Naive thymus-derived CD4-positive, alpha-beta T cell (primary cell): ENCODE measurements at regions of chr2 and their contacts with region 1.

Region 1: DNA sequence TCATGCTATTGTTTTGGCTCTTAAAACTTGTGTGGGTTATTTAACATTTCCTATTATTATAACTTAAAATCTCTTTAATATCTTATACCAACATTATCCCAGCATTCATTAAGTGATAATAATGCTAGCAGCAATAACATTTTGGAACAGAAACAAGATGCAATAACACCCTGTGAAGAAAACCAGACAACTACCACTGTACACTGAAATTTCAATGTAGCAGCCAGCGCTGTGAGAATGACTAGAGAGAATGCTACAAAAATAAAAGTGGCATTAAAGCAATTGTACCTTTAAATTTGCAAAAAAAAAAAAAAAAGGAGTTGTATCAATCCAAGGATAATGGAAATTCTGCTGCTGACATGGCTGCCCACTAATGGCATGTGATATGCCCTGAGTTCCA is 269.9 kb downstream of the TTC32 start:
- DNase-seq: no peak
- ATAC-seq: no peak
- H3K4me3 ChIP-seq: no peak overlapping the region
- H3K4me3 Mint-ChIP-seq: no peak overlapping the region
- H3K27ac ChIP-seq: no peak overlapping the region
- H3K27ac Mint-ChIP-seq: no peak overlapping the region
- H3K4me1 ChIP-seq: no peaks in the 10 kb centered on the region
- H3K4me1 Mint-ChIP-seq: peaks cover 0 to 3% (median 0%) of the 10 kb centered on the region in 7 donors
- H3K27me3 ChIP-seq: no peaks in the 10 kb centered on the region
- H3K27me3 Mint-ChIP-seq: peaks cover 7 to 35% (median 14%) of the 10 kb centered on the region in 5 donors

Region 2: GRCh38 chr2:18788592-18788991 is 843.3 kb before region 1 on chr2:
- CTCF ChIA-PET with region 1: no interaction called
- POLR2A ChIA-PET with region 1: no interaction called
- intact Hi-C with region 1: no loop called
- DNase-seq: no peak
- ATAC-seq: no peak
- H3K4me3 ChIP-seq: no peak overlapping the region
- H3K4me3 Mint-ChIP-seq: no peak overlapping the region
- H3K27ac ChIP-seq: no peak overlapping the region
- H3K27ac Mint-ChIP-seq: no peak overlapping the region
- H3K4me1 ChIP-seq: no peaks in the 10 kb centered on the region
- H3K4me1 Mint-ChIP-seq: peaks cover 0 to 3% (median 0%) of the 10 kb centered on the region in 7 donors
- H3K27me3 ChIP-seq: no peaks in the 10 kb centered on the region
- H3K27me3 Mint-ChIP-seq: no peaks in the 10 kb centered on the region

Region 3: GRCh38 chr2:18871430-18871829 is 760.4 kb before region 1 on chr2:
- CTCF ChIA-PET with region 1: no interaction called
- POLR2A ChIA-PET with region 1: interaction called, 10 read pairs
- intact Hi-C with region 1: no loop called
- DNase-seq: no peak
- ATAC-seq: no peak
- H3K4me3 ChIP-seq: no peak overlapping the region
- H3K4me3 Mint-ChIP-seq: no peak overlapping the region
- H3K27ac ChIP-seq: no peak overlapping the region
- H3K27ac Mint-ChIP-seq: no peak overlapping the region
- H3K4me1 ChIP-seq: no peaks in the 10 kb centered on the region
- H3K4me1 Mint-ChIP-seq: no peaks in the 10 kb centered on the region
- H3K27me3 ChIP-seq: no peaks in the 10 kb centered on the region
- H3K27me3 Mint-ChIP-seq: no peaks in the 10 kb centered on the region

Region 4: DNA sequence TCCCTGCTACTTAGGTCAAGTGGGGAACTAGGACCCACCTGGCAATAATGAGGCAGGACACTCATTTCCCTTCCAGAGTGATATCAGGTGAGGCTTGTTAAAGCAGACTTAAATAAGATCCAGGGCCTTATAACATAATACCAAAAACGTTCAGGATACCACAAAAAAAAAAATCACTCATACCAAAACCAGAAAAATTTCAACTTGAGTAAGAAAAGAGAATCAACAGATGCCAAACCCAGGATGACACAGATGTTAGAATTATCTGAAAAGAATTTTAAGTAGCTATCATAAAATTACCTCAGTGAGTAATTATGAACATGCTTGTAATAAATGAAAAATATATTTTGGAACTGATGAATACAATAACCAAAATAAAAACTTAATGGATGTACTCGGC is 17.8 kb before region 1 on chr2:
- CTCF ChIA-PET with region 1: no interaction called
- POLR2A ChIA-PET with region 1: no interaction called
- intact Hi-C with region 1: no loop called
- DNase-seq: no peak
- ATAC-seq: no peak
- H3K4me3 ChIP-seq: no peak overlapping the region
- H3K4me3 Mint-ChIP-seq: no peak overlapping the region
- H3K27ac ChIP-seq: no peak overlapping the region
- H3K27ac Mint-ChIP-seq: no peak overlapping the region
- H3K4me1 ChIP-seq: no peaks in the 10 kb centered on the region
- H3K4me1 Mint-ChIP-seq: no peaks in the 10 kb centered on the region
- H3K27me3 ChIP-seq: no peaks in the 10 kb centered on the region
- H3K27me3 Mint-ChIP-seq: peaks cover 0 to 33% (median 22%) of the 10 kb centered on the region in 5 donors